Aorta (tissue), 5 donors: ENCODE measurements at regions of chr1 and their contacts with region 1.

Region 1: GRCh38 chr1:72341661-72342060 is 59.3 kb upstream of the NEGR1 start:
- DNase-seq: no peak
- ATAC-seq: no peak
- H3K4me3 ChIP-seq: no peak overlapping the region
- H3K27ac ChIP-seq: no peak overlapping the region
- H3K4me1 ChIP-seq: no peaks in the 10 kb centered on the region
- H3K27me3 ChIP-seq: no peaks in the 10 kb centered on the region

Region 2: GRCh38 chr1:72197786-72198185 is 143.9 kb before region 1 on chr1:
- intact Hi-C with region 1: no loop called
- DNase-seq: no peak
- ATAC-seq: no peak
- H3K4me3 ChIP-seq: no peak overlapping the region
- H3K27ac ChIP-seq: no peak overlapping the region
- H3K4me1 ChIP-seq: no peaks in the 10 kb centered on the region
- H3K27me3 ChIP-seq: no peaks in the 10 kb centered on the region

Region 3: GRCh38 chr1:72296481-72296880 is 45.2 kb before region 1 on chr1:
- intact Hi-C with region 1: loop called in 1 of 2 experiments (anchors 2 kb)
- DNase-seq: no peak
- ATAC-seq: no peak
- H3K4me3 ChIP-seq: no peak overlapping the region
- H3K27ac ChIP-seq: no peak overlapping the region
- H3K4me1 ChIP-seq: no peaks in the 10 kb centered on the region
- H3K27me3 ChIP-seq: no peaks in the 10 kb centered on the region

Region 4: GRCh38 chr1:72649991-72650390 is 308.3 kb after region 1 on chr1:
- intact Hi-C with region 1: no loop called
- DNase-seq: no peak
- ATAC-seq: no peak
- H3K4me3 ChIP-seq: no peak overlapping the region
- H3K27ac ChIP-seq: no peak overlapping the region
- H3K4me1 ChIP-seq: no peaks in the 10 kb centered on the region
- H3K27me3 ChIP-seq: no peaks in the 10 kb centered on the region